IMR-90 (cell line): ENCODE measurements at regions of chr15 and their contacts with region 1.

Region 1: DNA sequence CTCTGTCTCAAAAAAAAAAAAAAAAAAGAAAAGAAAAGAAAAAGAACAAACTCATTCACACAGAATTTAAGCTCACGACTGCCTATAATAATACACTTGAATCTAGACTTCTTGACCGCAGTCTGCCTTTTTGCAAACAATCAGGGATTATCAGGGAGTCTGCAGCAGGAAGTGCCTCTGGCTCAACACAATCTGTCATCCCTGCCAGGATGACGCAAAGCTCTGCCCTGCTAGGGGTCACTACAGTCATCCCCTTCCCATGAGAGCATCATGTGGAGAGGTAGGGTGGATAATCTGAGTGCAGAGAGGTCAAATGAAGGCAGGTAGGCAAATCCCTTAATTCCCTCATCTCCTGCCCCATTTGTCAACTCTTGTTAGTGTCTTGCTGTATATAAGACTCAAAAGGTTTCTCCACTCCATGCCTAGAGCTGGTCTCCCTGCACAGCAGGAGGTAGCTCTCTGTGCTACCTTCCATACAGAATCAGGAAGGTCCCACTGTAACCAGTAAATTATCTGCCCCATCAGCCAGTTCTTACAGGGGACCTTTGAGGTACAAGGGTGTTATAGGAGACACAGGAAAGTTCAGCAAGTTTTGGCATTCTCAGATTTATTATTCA is 4.2 kb downstream of the UBAP1L start:
- DNase-seq: peak; percentile 92
- ATAC-seq: peak; percentile 91
- H3K4me3 ChIP-seq: no peak overlapping the region
- H3K27ac ChIP-seq: no peak overlapping the region
- H3K4me1 ChIP-seq: no peaks in the 10 kb centered on the region
- H3K27me3 ChIP-seq: no peaks in the 10 kb centered on the region
- CTCF ChIP-seq: no peak
- POLR2A ChIP-seq: no peak
- RAD21 ChIP-seq: no peak

Region 2: DNA sequence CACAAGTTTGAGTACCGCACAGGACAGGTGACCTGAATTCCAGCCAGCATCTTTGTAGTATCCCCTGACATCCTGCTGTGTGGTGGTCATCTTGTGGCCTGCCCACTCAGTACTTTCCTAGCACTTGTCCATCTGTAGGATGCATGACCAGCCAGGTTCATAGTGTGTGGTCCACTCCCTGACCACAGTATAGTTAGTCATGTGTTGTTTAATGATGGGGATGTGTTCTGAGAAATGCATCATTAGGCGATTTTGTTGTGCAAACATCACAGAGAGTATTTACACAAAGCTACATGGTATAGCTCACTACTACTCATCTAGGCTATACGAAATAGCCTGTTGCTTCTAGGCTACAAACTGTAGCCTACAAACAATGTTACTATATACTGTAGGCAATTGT is 318.5 kb before region 1 on chr15:
- CTCF ChIA-PET with region 1: no interaction called
- POLR2A ChIA-PET with region 1: no interaction called
- dilution Hi-C with region 1: no loop called
- in situ Hi-C with region 1: no loop called
- intact Hi-C with region 1: no loop called
- DNase-seq: peak; percentile 18
- ATAC-seq: no peak; the same call in 1 of the 2 replicates
- H3K4me3 ChIP-seq: no peak overlapping the region
- H3K27ac ChIP-seq: no peak overlapping the region
- H3K4me1 ChIP-seq: no peaks in the 10 kb centered on the region
- H3K27me3 ChIP-seq: no peaks in the 10 kb centered on the region
- CTCF ChIP-seq: no peak
- POLR2A ChIP-seq: no peak
- RAD21 ChIP-seq: no peak

Region 3: DNA sequence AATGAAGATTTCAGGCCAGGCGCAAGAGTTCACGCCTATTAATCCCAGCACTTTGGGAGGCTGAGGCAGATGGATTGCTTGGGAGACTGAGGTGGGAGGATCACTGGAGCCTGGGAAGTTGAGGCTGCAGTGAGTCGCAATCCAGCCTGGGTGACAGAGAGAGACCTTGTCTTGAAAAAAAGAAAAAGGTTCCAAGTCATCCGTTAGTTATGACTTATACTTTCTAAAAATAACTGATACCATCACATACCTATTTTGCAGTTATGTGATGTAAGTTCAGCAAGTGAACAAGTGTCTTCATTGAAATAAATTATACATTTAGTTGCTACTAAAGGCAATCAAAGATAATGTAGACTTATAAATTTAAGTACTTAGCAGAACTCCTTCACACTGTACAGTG is 52.3 kb after region 1 on chr15:
- CTCF ChIA-PET with region 1: no interaction called
- POLR2A ChIA-PET with region 1: no interaction called
- dilution Hi-C with region 1: no loop called
- in situ Hi-C with region 1: no loop called
- intact Hi-C with region 1: loop called (anchors 10 kb)
- DNase-seq: peak; percentile 55
- ATAC-seq: no peak
- H3K4me3 ChIP-seq: no peak overlapping the region
- H3K27ac ChIP-seq: no peak overlapping the region
- H3K4me1 ChIP-seq: no peaks in the 10 kb centered on the region
- H3K27me3 ChIP-seq: no peaks in the 10 kb centered on the region
- CTCF ChIP-seq: no peak
- POLR2A ChIP-seq: no peak
- RAD21 ChIP-seq: no peak

Region 4: DNA sequence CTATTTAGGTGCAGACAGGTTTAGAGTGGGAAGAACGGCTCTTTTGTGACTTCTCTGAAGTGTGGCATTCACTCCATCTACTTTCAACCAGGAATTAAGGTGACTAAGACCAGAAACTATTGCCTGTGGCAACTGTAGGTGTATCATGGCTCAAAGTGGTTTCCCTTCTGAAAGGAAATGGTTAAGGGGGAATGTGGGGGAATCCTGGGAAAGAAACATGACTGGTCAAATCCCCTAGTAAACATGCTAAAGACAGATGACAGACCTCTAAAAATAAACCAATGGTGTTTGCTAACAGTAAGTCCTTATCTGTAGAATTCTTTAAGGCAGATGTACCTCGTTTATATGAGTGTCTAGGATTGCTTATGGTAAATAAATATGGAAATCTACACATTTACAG is 1085.8 kb after region 1 on chr15:
- CTCF ChIA-PET with region 1: no interaction called
- POLR2A ChIA-PET with region 1: no interaction called
- dilution Hi-C with region 1: no loop called
- in situ Hi-C with region 1: no loop called
- intact Hi-C with region 1: no loop called
- DNase-seq: peak; percentile 2
- ATAC-seq: no peak
- H3K4me3 ChIP-seq: no peak overlapping the region
- H3K27ac ChIP-seq: no peak overlapping the region
- H3K4me1 ChIP-seq: no peaks in the 10 kb centered on the region
- H3K27me3 ChIP-seq: peaks cover 2% of the 10 kb centered on the region; the same call in 1 of the 2 replicates
- CTCF ChIP-seq: no peak
- POLR2A ChIP-seq: no peak
- RAD21 ChIP-seq: no peak